ENCODE measurements at regions of chr1 and their contacts with region 1.

Region 1: GRCh38 chr1:8061210-8061609 is 35.1 kb upstream of the ERRFI1 start:
- DNase-seq: peak; percentile 61 to 95
- H3K4me3 ChIP-seq: peak overlapping the region; percentile 47; the same call in 1 of the 2 replicates
- H3K27ac ChIP-seq: peak overlapping the region; percentile 99
- H3K4me1 ChIP-seq: peaks cover 62% of the 10 kb centered on the region
- H3K27me3 ChIP-seq: no peaks in the 10 kb centered on the region
- CTCF ChIP-seq: no peak

Region 2: DNA sequence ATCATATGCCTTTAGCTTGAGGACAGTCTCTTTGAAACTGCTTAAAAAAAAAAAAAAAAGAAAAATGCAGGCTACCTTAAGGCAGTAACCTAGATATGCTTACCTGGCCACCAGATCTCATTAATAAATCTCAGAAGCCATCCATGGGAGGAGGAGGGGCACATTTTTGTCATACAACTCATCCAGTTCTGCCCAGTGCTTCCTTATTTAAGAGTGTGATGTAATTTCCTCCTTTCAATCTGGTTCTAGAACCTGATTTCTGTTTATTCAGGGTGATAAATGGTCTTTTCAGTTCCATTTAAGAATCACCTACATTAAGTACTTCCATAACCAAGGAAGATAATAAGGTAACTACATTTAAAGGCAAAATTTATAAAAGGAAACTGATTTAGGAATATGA is 41.2 kb before region 1 on chr1:
- CTCF ChIA-PET with region 1: no interaction called
- POLR2A ChIA-PET with region 1: no interaction called
- intact Hi-C with region 1: no loop called
- DNase-seq: peak; percentile 74 to 95
- H3K4me3 ChIP-seq: peak overlapping the region; percentile 91
- H3K27ac ChIP-seq: peak overlapping the region; percentile 90
- H3K4me1 ChIP-seq: peaks cover 54% of the 10 kb centered on the region
- H3K27me3 ChIP-seq: no peaks in the 10 kb centered on the region
- CTCF ChIP-seq: no peak

Region 3: GRCh38 chr1:8082945-8083344 is 21.7 kb after region 1 on chr1:
- CTCF ChIA-PET with region 1: interaction called, 15 read pairs
- POLR2A ChIA-PET with region 1: interaction called, 3 read pairs
- intact Hi-C with region 1: loop called (anchors 1 kb)
- DNase-seq: no peak
- H3K4me3 ChIP-seq: no peak overlapping the region
- H3K27ac ChIP-seq: no peak overlapping the region
- H3K4me1 ChIP-seq: peaks cover 19% of the 10 kb centered on the region
- H3K27me3 ChIP-seq: no peaks in the 10 kb centered on the region
- CTCF ChIP-seq: no peak

Region 4: GRCh38 chr1:8104278-8105236 is 43.3 kb after region 1 on chr1:
- CTCF ChIA-PET with region 1: no interaction called
- POLR2A ChIA-PET with region 1: no interaction called
- intact Hi-C with region 1: no loop called
- DNase-seq: no peak
- H3K4me3 ChIP-seq: no peak overlapping the region
- H3K27ac ChIP-seq: no peak overlapping the region
- H3K4me1 ChIP-seq: peaks cover 7% of the 10 kb centered on the region; the same call in 1 of the 2 replicates
- H3K27me3 ChIP-seq: no peaks in the 10 kb centered on the region
- CTCF ChIP-seq: no peak

Region 5: DNA sequence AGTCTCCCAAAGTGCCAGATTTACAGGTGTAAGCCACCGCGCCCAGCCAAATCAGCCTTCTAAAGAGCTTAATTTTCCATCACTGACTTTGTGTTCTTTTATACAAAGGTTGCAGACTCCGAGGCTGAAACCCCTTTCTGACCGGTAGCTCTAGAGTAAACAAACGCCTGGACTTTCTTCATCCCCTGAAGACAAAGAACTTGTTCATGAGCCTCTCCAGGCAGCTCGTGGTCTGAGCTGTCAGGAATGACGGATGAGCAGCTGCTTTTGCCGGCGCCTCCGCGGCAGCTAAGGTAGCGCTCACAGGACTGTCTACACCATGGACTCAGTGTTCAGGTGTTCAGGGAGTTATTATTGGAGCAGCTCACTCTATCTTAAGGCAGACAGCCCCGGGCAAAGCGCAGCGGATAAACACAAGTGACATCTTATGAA is 93.4 kb after region 1 on chr1:
- CTCF ChIA-PET with region 1: no interaction called
- POLR2A ChIA-PET with region 1: interaction called, 45 read pairs
- intact Hi-C with region 1: no loop called
- DNase-seq: peak; percentile 81 to 95
- H3K4me3 ChIP-seq: no peak overlapping the region
- H3K27ac ChIP-seq: peak overlapping the region; percentile 99
- H3K4me1 ChIP-seq: peaks cover 31% of the 10 kb centered on the region
- H3K27me3 ChIP-seq: no peaks in the 10 kb centered on the region
- CTCF ChIP-seq: no peak

Region 6: DNA sequence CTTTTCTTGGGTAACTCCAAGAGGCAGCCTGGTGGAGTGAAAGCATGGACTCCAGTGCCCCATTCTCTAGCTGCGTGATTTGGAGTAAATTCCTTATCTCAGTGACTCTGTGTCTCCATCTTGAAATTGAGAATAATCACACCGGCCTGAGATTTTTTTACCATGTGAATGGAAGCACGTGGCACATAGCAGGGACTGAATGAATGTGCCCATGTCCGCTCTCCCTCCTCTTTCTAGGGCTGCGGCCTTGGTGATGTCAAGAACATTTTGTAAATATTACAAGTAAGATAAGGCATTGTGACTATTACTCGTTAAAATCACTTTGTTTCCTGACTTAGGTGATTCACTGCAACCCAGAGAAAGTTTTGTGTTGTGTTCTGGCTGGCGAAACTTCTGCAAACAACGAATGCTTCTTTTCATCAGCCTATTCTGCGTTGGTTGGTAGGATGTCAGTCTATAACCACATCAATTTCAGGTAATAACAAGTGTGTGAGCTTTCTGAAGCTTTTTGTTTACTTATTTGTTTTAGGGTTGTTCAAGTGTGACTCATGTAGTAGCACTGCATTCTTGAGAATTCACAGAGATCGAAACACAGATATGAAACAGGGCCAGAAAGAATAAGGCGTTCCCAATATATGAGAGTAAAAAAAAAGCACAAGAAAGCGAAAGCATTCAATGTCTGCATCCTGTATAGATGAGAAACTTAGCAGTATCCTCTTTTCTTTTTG is 121.0 kb after region 1 on chr1:
- CTCF ChIA-PET with region 1: no interaction called
- POLR2A ChIA-PET with region 1: no interaction called
- intact Hi-C with region 1: loop called (anchors 1 kb)
- DNase-seq: peak; percentile 64 to 98
- H3K4me3 ChIP-seq: peak overlapping the region; percentile 28; the same call in 1 of the 2 replicates
- H3K27ac ChIP-seq: peak overlapping the region; percentile 100
- H3K4me1 ChIP-seq: peaks cover 40% of the 10 kb centered on the region
- H3K27me3 ChIP-seq: no peaks in the 10 kb centered on the region
- CTCF ChIP-seq: no peak